MCF 10A (cell line): ENCODE measurements at regions of chr15 and their contacts with region 1.

Region 1: DNA sequence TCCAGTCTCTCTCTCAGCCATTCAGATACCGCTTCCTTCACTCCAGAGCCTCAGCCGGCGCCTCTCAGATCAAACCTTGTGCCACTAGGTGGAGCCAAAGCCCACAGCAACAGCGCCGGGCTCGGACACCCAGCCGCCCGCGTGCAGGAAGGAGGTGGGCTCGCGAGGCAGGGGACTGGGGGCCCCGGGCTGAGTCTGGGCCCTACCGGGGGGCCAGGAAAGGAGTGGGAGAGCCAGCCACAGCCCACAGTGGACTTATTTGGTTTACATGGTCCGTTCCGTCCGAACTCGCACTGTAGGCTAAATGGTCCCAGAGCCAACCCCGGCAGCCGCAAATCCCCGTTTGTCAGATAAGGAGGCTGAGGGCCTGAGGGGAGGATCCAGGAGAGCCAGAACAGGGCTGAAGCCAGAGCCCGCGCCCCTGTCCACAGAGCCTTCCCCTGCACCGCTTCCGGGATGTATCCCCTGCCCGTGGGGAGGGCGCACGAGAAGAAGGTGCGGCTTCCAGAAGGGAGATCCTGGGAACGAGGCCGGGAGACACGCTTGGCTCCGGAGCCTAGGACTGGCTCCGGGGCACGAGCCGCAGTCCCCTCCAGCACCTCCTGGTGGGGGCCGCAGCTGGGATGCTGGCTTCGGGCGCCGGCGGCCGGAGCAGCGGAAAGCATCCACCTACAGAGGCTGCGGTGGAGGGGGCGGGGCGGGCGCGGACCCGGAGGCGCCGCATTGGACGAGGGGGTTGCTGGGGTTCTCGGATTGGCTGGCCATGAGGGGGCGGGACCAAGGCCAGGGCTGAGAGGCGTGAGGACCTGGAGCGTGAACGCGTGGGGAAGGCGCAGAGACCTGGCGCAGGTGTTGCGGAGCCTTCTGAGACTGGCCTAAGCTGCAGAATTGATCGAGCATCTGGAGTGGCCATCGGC is 6.5 kb upstream of the CYP11A1 start:
- DNase-seq: peak; percentile 92
- H3K4me3 Mint-ChIP-seq: peak overlapping the region; percentile 78
- H3K27ac Mint-ChIP-seq: no peak overlapping the region
- H3K4me1 Mint-ChIP-seq: no peaks in the 10 kb centered on the region
- H3K27me3 Mint-ChIP-seq: peaks cover 37% of the 10 kb centered on the region
- CTCF ChIP-seq: peak; percentile 82

Region 2: DNA sequence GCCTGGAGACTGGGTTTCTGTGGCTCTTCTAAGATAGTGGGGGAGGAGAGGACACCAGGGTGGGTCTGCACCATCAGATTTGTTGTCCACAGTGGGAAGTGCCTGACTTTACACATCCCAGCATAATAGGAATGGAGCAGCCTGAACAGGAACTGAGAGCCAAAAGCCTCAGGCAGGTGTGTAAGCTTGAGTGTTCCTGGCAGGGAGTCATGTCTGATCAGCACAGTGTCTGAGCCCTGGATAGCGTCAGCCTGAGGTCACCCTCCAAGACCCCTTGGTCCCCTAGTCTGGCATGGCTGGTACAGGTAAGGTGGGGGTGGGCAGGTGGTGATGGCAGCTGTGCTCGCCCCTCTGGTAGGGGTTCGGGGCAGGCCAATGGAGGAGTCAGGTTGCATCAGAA is 641.1 kb before region 1 on chr15:
- CTCF ChIA-PET with region 1: no interaction called
- POLR2A ChIA-PET with region 1: no interaction called
- intact Hi-C with region 1: no loop called
- DNase-seq: no peak
- H3K4me3 Mint-ChIP-seq: no peak overlapping the region
- H3K27ac Mint-ChIP-seq: no peak overlapping the region
- H3K4me1 Mint-ChIP-seq: no peaks in the 10 kb centered on the region
- H3K27me3 Mint-ChIP-seq: no peaks in the 10 kb centered on the region
- CTCF ChIP-seq: no peak

Region 3: GRCh38 chr15:74361381-74361780 is 12.6 kb before region 1 on chr15:
- CTCF ChIA-PET with region 1: interaction called, 15 read pairs
- POLR2A ChIA-PET with region 1: no interaction called
- intact Hi-C with region 1: no loop called
- DNase-seq: no peak
- H3K4me3 Mint-ChIP-seq: no peak overlapping the region
- H3K27ac Mint-ChIP-seq: no peak overlapping the region
- H3K4me1 Mint-ChIP-seq: no peaks in the 10 kb centered on the region
- H3K27me3 Mint-ChIP-seq: no peaks in the 10 kb centered on the region
- CTCF ChIP-seq: no peak

Region 4: GRCh38 chr15:74489518-74490338 is 115.7 kb after region 1 on chr15:
- CTCF ChIA-PET with region 1: interaction called, 6 read pairs
- POLR2A ChIA-PET with region 1: no interaction called
- intact Hi-C with region 1: loop called (anchors 1 kb)
- DNase-seq: peak; percentile 53
- H3K4me3 Mint-ChIP-seq: no peak overlapping the region
- H3K27ac Mint-ChIP-seq: no peak overlapping the region
- H3K4me1 Mint-ChIP-seq: no peaks in the 10 kb centered on the region
- H3K27me3 Mint-ChIP-seq: no peaks in the 10 kb centered on the region
- CTCF ChIP-seq: peak; percentile 70

Region 5: DNA sequence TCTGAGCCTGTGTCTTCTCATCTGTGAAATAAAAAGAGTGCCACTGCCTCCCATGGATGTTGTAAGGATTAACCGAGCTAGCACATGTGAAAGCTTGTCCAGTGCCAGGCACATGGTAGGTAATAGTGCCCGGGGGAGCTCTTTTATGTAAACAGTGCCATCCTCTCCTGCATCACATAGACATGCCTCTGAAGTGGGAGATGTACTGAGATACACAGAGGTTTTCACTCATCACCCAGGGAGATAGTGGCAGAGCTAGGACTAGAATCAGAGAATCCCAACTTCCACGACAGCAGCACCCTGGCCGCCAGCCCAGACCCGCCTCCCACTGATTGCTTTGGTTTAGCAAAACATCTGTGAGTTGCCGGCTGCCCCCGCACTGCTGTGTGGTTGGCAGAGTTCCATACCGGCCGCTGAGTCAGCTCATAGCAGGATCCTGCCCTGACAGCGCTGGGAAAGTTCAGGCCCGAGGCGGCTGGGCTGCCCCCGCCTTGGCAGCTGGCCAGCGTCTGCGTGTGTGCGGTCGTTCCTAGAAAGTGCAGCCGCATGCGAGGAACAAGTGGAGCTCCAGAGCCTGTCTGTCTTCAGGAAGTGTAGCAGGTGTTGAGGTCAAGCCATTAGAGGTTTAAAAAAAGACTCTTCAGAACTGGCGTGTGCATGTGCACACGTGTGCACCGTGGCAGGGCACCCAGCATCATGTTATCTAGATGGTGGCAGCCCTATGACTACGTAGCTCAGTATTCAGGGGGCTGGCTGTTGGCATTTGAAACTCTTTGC is 172.1 kb after region 1 on chr15:
- CTCF ChIA-PET with region 1: interaction called, 12 read pairs
- POLR2A ChIA-PET with region 1: interaction called, 3 read pairs
- intact Hi-C with region 1: loop called (anchors 2 kb)
- DNase-seq: peak; percentile 99
- H3K4me3 Mint-ChIP-seq: no peak overlapping the region
- H3K27ac Mint-ChIP-seq: no peak overlapping the region
- H3K4me1 Mint-ChIP-seq: peaks cover 34% of the 10 kb centered on the region
- H3K27me3 Mint-ChIP-seq: peaks cover 38% of the 10 kb centered on the region
- CTCF ChIP-seq: no peak

Region 6: DNA sequence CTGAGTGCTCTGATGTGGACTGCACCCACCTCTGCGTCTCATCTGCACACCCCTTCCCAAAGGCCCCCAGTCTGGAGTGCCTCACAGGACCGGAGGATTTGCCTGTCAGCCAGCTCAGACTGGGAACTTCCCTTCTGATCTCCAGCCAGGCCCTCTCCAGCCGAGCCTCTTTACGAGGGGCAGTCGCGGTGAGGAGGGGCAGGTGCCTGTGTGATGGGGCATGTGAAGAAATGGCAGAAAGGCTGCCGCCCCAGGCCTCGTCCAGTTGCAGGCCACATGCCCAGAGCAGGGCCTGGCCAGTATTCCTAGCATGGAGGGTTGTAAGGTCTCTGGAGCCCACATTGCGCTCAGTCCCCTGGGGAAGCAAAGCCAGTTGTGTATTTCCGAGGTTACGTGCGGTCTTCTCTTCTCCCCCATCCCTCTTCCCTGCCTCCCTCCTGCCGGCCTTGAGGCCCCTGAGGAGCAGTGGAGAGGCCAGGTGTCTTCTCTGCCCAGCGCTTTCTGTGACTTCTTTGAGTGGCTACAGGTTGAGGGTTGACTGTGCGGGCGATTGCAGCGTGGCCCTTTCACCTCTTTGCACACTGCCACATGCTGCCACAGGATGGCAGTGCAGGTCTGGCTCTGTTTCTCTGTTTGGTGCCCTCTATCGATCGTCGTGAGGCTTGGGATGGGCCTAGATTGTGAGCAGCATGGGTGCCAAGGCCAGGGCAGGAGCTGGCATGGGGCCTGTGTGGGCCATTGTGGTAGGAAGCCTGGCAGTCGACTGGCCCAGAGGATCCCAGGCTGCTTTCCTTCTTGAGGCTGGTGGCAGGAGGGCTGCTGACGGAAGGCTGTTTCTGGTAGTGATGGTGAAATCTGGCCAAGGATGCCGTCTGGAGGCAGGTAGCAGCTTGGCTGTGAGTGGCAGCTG is 246.9 kb after region 1 on chr15:
- CTCF ChIA-PET with region 1: interaction called, 10 read pairs
- POLR2A ChIA-PET with region 1: interaction called, 3 read pairs
- intact Hi-C with region 1: loop called (anchors 2 kb)
- DNase-seq: peak; percentile 88
- H3K4me3 Mint-ChIP-seq: no peak overlapping the region
- H3K27ac Mint-ChIP-seq: peak overlapping the region; percentile 13
- H3K4me1 Mint-ChIP-seq: peaks cover 37% of the 10 kb centered on the region
- H3K27me3 Mint-ChIP-seq: no peaks in the 10 kb centered on the region
- CTCF ChIP-seq: peak; percentile 97

Region 7: GRCh38 chr15:74635228-74635627 is 261.2 kb after region 1 on chr15:
- CTCF ChIA-PET with region 1: interaction called, 12 read pairs
- POLR2A ChIA-PET with region 1: no interaction called
- intact Hi-C with region 1: loop called (anchors 1 kb)
- DNase-seq: peak; percentile 81
- H3K4me3 Mint-ChIP-seq: no peak overlapping the region
- H3K27ac Mint-ChIP-seq: no peak overlapping the region
- H3K4me1 Mint-ChIP-seq: no peaks in the 10 kb centered on the region
- H3K27me3 Mint-ChIP-seq: no peaks in the 10 kb centered on the region
- CTCF ChIP-seq: peak; percentile 89

Region 8: GRCh38 chr15:74956648-74957300 is 582.8 kb after region 1 on chr15 and contains the start of gene RPP25:
- CTCF ChIA-PET with region 1: interaction called, 4 read pairs
- POLR2A ChIA-PET with region 1: no interaction called
- intact Hi-C with region 1: loop called (anchors 10 kb)
- DNase-seq: peak; percentile 76
- H3K4me3 Mint-ChIP-seq: peak within 1 kb of the TSS; percentile 68
- H3K27ac Mint-ChIP-seq: no peak within 1 kb of the TSS
- H3K4me1 Mint-ChIP-seq: no peaks in the 10 kb centered on the region
- H3K27me3 Mint-ChIP-seq: no peaks in the 10 kb centered on the region
- CTCF ChIP-seq: no peak
- total RNA-seq, gene RPP25: 0.17 TPM in 1 of 2 replicates, not detected in the other